Sciatic nerve (tissue), 2 donors: ENCODE measurements at regions of chr5 and their contacts with region 1.

Region 1: GRCh38 chr5:5902678-5903646 is 475.4 kb downstream of the MED10 start:
- DNase-seq: no peak
- ATAC-seq: no peak

Region 2: DNA sequence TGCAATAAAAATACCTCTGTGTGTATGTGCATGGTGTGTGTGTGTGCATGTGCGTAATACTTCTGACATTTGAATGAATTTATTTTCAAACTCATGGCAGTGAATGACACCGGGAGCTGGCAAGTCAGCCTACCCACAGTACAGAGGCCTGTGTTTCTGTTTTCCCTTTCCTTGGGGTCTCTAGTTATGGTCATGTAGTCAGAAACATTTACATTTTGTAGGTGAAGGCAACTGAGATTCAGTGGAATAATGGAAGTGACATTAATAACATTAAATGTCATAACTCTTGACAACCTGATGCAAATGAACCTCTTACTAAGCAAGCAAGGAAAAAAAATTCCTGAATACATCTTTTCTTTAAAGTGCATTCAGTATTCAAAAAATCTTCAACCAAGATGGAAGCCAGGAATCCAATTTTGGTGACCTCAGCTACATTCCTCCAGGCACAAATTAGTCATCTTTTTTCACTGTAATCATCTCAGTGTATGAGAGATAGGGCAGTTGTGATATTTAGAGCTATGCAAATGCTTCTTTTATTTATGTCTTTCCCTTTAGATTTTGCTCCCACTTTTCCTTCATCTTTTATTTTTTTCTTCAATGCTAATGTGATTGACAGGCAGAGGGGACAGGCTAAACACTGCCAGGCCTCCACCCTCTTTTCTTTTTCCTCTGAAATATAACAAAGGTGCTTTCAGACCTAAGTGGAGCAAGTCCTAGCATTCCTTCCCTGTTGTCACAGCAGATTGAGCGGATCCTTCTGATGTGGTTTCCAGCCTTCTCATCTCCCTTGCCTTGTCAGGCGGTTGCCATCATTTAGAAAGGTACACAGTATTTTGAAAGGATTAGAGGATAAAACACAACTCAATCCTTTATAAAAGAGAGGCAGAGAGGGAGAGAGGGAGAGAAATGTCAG is 1332.7 kb before region 1 on chr5:
- intact Hi-C with region 1: loop called (anchors 5 kb)
- DNase-seq: no peak
- ATAC-seq: no peak

Region 3: GRCh38 chr5:5719292-5719691 is 183.7 kb before region 1 on chr5:
- intact Hi-C with region 1: no loop called
- DNase-seq: no peak
- ATAC-seq: no peak